ENCODE measurements at regions of chr9 and their contacts with region 1.

Region 1: DNA sequence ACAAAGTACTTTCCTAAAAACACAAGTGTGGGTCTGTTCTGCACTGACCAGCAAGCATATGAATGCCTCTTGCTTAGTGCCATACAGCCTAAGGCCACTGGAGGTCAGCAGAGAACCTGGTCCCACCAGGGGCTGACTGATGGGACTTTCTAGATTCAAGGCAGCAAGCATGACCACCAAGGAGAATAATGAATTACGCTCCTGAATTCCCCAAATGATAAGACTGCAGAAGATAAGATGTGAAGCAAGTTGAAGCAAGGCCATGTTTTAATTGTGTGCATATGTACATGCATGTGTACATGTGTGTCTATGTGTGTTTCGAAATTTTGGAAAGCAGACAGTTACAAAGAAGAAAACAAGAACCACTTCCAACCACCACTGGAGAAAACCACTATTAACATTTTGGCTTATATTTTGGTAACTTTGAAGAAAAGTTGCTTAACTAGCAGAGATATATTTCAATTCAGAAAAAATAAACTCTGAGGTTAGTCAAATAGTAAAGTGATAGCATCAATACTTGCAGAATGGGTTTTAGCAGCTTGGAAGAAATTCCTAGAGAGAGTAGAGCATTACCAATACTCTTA is 70.5 kb downstream of the ERP44 start:
- DNase-seq: peak; percentile 87
- H3K4me3 ChIP-seq: no peak overlapping the region
- H3K27ac ChIP-seq: no peak overlapping the region
- H3K4me1 ChIP-seq: no peaks in the 10 kb centered on the region
- H3K27me3 ChIP-seq: no peaks in the 10 kb centered on the region
- CTCF ChIP-seq: peak; percentile 89 to 95
- POLR2A ChIP-seq: no peak

Region 2: DNA sequence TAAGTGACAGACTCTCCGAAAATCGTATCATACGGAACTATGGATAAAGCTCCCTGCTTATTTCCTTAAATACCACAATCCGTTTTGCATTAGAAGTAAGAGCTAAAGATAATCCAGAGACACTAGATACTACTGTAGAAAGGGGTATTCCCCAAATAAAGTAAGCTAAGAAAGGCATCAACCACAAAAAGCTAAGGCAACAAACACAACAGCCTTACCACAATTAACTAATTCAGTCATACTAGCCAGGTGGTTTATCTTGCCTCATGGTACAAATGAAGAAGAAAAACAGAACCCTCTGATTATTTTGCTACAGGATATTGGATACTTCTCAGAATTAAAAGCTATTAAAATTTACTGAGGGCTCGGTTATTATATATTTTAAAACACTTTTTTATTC is 56.4 kb after region 1 on chr9:
- CTCF ChIA-PET with region 1: no interaction called
- POLR2A ChIA-PET with region 1: no interaction called
- dilution Hi-C with region 1: no loop called
- intact Hi-C with region 1: loop called (anchors 2 kb)
- DNase-seq: no peak
- H3K4me3 ChIP-seq: no peak overlapping the region
- H3K27ac ChIP-seq: no peak overlapping the region
- H3K4me1 ChIP-seq: peaks cover 33% of the 10 kb centered on the region
- H3K27me3 ChIP-seq: no peaks in the 10 kb centered on the region
- CTCF ChIP-seq: no peak
- POLR2A ChIP-seq: no peak

Region 3: DNA sequence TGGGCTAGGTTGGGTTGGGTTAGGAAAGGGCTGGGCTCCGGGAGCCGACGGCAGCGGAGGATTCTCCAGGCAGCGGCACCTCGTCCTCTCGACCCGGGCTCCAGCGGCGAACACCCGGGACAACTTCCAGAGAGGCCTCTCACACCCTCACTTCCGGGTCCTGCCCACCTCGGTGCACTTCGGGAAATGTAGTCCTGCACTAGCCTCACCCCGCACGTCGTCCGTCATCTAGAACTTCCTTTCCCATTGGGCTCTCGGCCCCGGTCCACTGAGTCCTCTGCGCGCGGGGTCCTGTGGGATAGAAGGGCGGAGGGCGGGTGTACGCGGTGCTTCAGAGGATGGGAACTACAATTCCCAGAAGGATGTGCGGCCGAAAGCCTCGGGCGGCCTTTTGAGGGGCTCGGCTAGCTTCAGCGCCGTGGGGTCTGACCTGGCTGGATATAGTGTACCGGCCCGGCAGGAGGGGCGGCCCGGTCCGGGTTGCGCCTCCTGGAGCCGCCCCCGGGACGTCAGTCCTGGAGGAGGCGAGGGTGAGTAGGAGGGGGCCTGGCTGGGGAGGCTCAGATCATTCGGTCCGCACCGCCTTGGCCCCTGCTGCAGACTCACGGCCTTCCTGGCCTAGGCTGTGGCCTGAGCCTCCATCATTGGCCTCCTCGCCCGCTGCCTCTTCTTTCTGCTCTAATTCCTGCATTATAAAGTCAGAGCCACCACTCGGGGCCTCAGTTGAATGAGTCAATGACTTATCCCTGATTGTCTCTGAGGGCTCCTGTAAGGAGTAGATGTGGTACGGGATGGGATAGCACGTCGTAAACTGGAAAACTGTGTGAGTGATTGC is 70.8 kb after region 1 on chr9 and contains the starts of genes ERP44 and INVS:
- CTCF ChIA-PET with region 1: interaction called, 3 read pairs
- POLR2A ChIA-PET with region 1: no interaction called
- dilution Hi-C with region 1: no loop called
- intact Hi-C with region 1: loop called (anchors 1 kb)
- DNase-seq: peak; percentile 99
- H3K4me3 ChIP-seq: peak within 1 kb of the TSS; percentile 63 to 85 (median 76)
- H3K27ac ChIP-seq: peak within 1 kb of the TSS; percentile 74
- H3K4me1 ChIP-seq: peaks cover 20% of the 10 kb centered on the region
- H3K27me3 ChIP-seq: no peaks in the 10 kb centered on the region
- CTCF ChIP-seq: no peak
- POLR2A ChIP-seq: peak; percentile 93
- total RNA-seq, gene ERP44: 19.3 and 21.4 TPM in 2 replicates
- total RNA-seq, gene INVS: 17.9 and 20.3 TPM in 2 replicates

Region 4: GRCh38 chr9:100216178-100216787 is 188.0 kb after region 1 on chr9:
- CTCF ChIA-PET with region 1: interaction called, 10 read pairs
- POLR2A ChIA-PET with region 1: no interaction called
- dilution Hi-C with region 1: no loop called
- intact Hi-C with region 1: loop called (anchors 1 kb)
- DNase-seq: peak; percentile 61
- H3K4me3 ChIP-seq: no peak overlapping the region
- H3K27ac ChIP-seq: no peak overlapping the region
- H3K4me1 ChIP-seq: no peaks in the 10 kb centered on the region
- H3K27me3 ChIP-seq: no peaks in the 10 kb centered on the region
- CTCF ChIP-seq: peak; percentile 72 to 76
- POLR2A ChIP-seq: no peak

Region 5: GRCh38 chr9:100222674-100223073 is 194.4 kb after region 1 on chr9:
- CTCF ChIA-PET with region 1: interaction called, 16 read pairs
- POLR2A ChIA-PET with region 1: no interaction called
- dilution Hi-C with region 1: no loop called
- intact Hi-C with region 1: loop called (anchors 1 kb)
- DNase-seq: peak; percentile 53
- H3K4me3 ChIP-seq: no peak overlapping the region
- H3K27ac ChIP-seq: no peak overlapping the region
- H3K4me1 ChIP-seq: no peaks in the 10 kb centered on the region
- H3K27me3 ChIP-seq: no peaks in the 10 kb centered on the region
- CTCF ChIP-seq: peak; percentile 10 to 13
- POLR2A ChIP-seq: no peak

Region 6: GRCh38 chr9:100472788-100473275 is 444.5 kb after region 1 on chr9 and contains the start of gene TMEFF1:
- CTCF ChIA-PET with region 1: no interaction called
- POLR2A ChIA-PET with region 1: no interaction called
- dilution Hi-C with region 1: no loop called
- intact Hi-C with region 1: loop called (anchors 10 kb)
- DNase-seq: peak; percentile 61
- H3K4me3 ChIP-seq: peak within 1 kb of the TSS; percentile 49 to 85 (median 51)
- H3K27ac ChIP-seq: no peak within 1 kb of the TSS
- H3K4me1 ChIP-seq: peaks cover 3% of the 10 kb centered on the region
- H3K27me3 ChIP-seq: no peaks in the 10 kb centered on the region
- CTCF ChIP-seq: no peak
- POLR2A ChIP-seq: no peak
- total RNA-seq, gene TMEFF1: 9.8 and 14.6 TPM in 2 replicates

Measured in endothelial cell of umbilical vein (primary cell).